ENCODE measurements at regions of chr15 and their contacts with region 1.

Region 1: DNA sequence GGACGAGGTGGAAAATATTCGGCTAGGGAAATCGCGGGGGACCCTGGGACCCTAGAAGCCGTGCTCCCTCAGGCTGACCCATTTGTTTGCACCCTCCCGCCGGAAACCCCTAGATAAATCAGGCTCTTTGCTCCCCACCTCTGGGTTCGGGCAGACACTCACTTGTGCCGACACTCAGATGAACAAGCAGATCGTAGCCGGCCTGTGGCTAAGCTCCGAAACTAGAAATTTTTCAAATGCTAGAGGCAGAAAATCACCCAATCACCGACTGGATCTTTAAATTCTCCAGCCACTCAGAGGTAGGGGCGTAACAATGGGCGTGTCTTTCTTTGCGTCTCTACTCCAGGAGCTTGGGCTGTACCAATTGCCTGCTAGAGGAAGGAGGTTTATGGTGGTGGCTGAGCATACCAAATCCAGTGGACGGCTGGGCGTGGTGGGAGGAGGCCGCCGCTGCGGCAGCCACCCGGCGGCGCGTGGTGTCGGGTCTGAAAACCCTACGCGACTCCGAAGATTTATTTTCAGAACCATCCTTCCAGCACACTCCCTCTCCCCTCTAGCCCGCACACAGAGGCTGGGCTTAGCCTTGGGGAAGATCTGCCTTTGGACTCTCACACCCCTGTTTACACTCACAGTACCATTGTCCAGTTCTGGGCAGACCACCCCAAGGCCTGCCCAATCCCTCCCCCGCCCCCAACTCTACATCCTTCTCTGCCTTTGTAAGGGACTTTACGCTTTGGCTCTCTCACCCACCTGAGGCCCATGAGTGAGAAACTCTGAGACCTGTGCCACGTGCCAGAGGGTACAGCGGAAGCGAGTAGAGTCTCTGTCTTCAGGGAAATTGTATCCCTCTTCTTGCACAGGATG is at the start of gene PIF1:
- DNase-seq: peak; percentile 67 to 97 (median 84)
- ATAC-seq: peak; percentile 97
- H3K4me3 ChIP-seq: peak within 1 kb of the TSS; percentile 41 to 47
- H3K4me3 Mint-ChIP-seq: peak within 1 kb of the TSS; percentile 88
- H3K27ac ChIP-seq: peak within 1 kb of the TSS in 1 of 2 experiments; percentile 64
- H3K27ac Mint-ChIP-seq: peak within 1 kb of the TSS; percentile 70
- H3K4me1 ChIP-seq: peaks cover 23% of the 10 kb centered on the region
- H3K4me1 Mint-ChIP-seq: peaks cover 32% of the 10 kb centered on the region
- H3K27me3 ChIP-seq: no peaks in the 10 kb centered on the region
- H3K27me3 Mint-ChIP-seq: peaks cover 14% of the 10 kb centered on the region
- CTCF ChIP-seq: no peak
- total RNA-seq, gene PIF1: 0.50 to 0.76 TPM

Region 2: DNA sequence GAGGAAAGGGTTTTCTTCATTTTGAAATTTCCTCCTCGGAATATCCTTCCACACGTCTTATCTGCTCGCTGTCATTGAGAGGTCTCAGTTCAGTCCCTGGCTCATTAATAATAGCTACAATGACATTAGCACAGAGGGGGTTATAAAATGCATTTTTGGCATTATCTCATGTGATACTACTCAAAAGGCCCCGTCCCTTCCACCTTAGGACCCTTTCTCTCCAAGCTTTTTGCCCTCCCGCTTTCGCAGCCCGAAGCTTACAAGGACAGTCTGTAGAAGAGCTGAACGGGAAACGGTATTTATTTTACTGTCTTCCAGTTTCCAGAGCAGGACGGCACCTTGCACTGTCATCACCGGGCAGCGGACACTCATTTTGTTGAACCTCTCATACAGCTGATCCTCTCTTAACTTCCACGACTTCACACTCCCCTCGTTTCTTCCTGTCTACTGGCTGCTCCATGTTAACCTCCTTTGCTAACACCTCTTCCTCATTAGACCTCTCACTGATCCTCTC is 10.4 kb after region 1 on chr15:
- CTCF ChIA-PET with region 1: interaction called, 19 read pairs
- POLR2A ChIA-PET with region 1: interaction called, 5 read pairs
- intact Hi-C with region 1: loop called (anchors 1 kb)
- DNase-seq: no peak
- ATAC-seq: no peak
- H3K4me3 ChIP-seq: no peak overlapping the region
- H3K4me3 Mint-ChIP-seq: no peak overlapping the region
- H3K27ac ChIP-seq: no peak overlapping the region
- H3K27ac Mint-ChIP-seq: peak overlapping the region; percentile 43
- H3K4me1 ChIP-seq: peaks cover 53% of the 10 kb centered on the region
- H3K4me1 Mint-ChIP-seq: peaks cover 49% of the 10 kb centered on the region
- H3K27me3 ChIP-seq: no peaks in the 10 kb centered on the region
- H3K27me3 Mint-ChIP-seq: no peaks in the 10 kb centered on the region
- CTCF ChIP-seq: no peak

Region 3: DNA sequence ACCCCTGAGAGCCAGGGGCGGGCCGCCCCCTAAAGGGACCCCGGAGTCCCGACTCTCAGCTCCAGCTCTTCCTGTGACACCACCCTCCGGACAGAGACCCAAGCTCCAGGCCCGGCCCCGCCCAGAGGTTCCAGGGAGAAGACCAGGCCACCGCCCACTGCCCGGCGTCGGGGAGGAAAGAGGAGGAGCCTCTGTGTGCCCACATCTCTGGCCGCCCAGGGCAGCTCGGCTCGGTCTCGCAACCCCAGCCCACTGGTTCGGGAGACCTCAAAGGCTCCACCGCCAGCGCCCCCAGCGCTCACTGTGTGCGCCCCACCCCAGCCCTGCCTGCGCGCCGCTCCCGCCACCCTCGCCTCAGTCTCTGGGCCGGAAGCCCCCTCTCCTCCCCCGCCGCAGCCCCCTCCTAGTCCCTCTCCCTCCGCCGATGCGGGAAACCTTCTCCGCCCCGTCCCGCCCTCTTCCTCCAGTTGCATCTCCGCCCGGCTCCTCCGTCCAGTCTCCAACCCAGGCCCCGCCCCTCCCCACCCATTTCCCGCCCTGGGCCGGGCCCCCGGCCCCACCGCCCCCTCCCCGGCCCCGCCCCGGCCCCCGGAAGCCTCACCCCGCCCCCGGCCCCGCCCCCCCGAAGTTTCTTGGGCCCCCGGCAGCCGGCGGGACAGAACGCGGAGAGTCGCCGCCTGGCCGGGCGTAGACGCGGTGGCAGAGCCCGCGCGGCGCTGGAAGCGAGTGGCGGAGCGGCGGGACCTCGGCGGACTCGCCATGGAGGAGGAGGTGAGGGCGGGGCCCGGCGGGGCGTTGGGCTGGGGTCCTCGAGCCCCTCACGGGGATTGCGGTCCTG is 15.8 kb after region 1 on chr15 and contains the start of gene PLEKHO2:
- CTCF ChIA-PET with region 1: interaction called, 5 read pairs
- POLR2A ChIA-PET with region 1: interaction called, 5 read pairs
- intact Hi-C with region 1: loop called (anchors 1 to 2 kb)
- DNase-seq: peak; percentile 66 to 96 (median 91)
- ATAC-seq: peak; percentile 76
- H3K4me3 ChIP-seq: peak within 1 kb of the TSS; percentile 65 to 71
- H3K4me3 Mint-ChIP-seq: peak within 1 kb of the TSS; percentile 95
- H3K27ac ChIP-seq: peak within 1 kb of the TSS; percentile 57 to 79
- H3K27ac Mint-ChIP-seq: peak within 1 kb of the TSS; percentile 93
- H3K4me1 ChIP-seq: peaks cover 81% of the 10 kb centered on the region
- H3K4me1 Mint-ChIP-seq: peaks cover 82% of the 10 kb centered on the region
- H3K27me3 ChIP-seq: no peaks in the 10 kb centered on the region
- H3K27me3 Mint-ChIP-seq: no peaks in the 10 kb centered on the region
- CTCF ChIP-seq: peak; percentile 40
- total RNA-seq, gene PLEKHO2: 7.9 to 8.2 TPM

Region 4: DNA sequence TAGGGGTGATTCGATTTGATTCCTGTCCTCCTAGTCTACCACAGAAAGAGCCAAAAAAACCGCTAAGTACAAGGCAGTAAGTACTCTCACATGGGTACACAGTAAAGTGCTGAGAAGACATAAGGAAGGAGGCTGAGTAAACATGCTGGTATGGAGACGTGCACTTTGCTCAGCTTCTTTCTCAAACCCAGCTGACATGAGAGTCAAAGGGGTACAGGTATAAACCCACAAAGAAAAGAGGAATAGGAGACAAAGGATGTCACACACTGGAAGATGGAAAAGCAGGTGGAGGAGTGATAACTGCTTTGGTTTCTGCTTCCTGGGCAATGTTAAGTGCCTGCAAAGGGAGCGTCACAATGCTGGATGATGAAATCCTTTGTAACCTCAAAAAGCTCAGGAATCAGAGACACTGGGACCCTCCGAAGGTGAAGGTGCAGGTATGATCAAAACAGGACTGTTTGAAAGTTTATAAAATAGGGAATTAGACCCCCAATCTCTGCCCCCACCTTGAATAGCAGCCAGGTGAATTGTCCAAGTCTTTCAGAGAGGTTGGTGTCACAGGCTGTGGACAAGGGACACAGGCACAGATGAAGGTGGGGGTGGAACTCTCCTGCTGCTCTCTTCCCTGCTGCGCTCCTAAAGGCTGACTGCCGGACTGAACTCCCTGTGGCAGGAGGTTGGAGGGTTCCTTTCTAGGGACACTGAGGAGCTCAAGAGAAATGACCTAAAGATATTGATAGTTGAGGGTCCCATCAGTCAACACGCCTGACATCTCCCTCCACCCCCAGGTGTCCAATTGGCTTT is 1145.5 kb after region 1 on chr15:
- CTCF ChIA-PET with region 1: no interaction called
- POLR2A ChIA-PET with region 1: no interaction called
- intact Hi-C with region 1: no loop called
- DNase-seq: no peak
- ATAC-seq: no peak
- H3K4me3 ChIP-seq: no peak overlapping the region
- H3K4me3 Mint-ChIP-seq: no peak overlapping the region
- H3K27ac ChIP-seq: no peak overlapping the region
- H3K27ac Mint-ChIP-seq: no peak overlapping the region
- H3K4me1 ChIP-seq: no peaks in the 10 kb centered on the region
- H3K4me1 Mint-ChIP-seq: no peaks in the 10 kb centered on the region
- H3K27me3 ChIP-seq: peaks cover 0 to 3% of the 10 kb centered on the region in 2 experiments
- H3K27me3 Mint-ChIP-seq: peaks cover 37% of the 10 kb centered on the region
- CTCF ChIP-seq: no peak